ENCODE measurements at regions of chr21 and their contacts with region 1.

Region 1: GRCh38 chr21:32826329-32827167 is 55.0 kb upstream of the PAXBP1 start:
- DNase-seq: no peak
- ATAC-seq: peak; percentile 37 to 87 (median 83)
- H3K4me3 ChIP-seq: no peak overlapping the region
- H3K27ac ChIP-seq: no peak overlapping the region
- H3K4me1 ChIP-seq: no peaks in the 10 kb centered on the region
- H3K27me3 ChIP-seq: no peaks in the 10 kb centered on the region
- CTCF ChIP-seq: peak in 11 of 12 donors; percentile 4 to 59 (median 48)
- POLR2A ChIP-seq: no peak

Region 2: DNA sequence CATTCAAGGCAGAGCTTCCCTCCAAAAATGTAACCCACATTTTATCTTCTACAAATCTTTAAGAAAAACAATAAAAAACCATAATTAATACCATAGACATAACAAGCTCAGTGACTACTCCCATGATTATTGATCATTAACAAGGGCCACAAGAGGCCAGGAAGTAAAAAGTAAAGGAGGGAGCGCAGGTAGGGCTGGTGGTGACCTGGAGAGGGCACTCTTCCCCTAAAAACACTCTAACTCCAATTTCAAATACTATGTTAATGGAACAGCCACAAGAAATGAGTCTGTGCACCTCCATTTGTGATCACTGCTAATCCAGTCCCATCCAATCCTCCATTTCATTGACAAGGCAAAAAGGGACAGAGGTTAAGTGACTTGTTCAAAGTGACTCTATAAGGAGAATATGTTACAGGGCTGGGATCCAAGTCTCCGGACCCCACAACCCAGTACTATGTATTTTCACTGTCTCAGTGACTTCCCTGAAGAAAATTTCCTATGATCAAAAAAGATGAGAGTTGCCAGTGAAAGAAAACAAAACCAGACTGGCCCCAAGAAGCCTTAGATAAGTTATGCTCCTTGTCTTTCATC is 173.1 kb before region 1 on chr21:
- intact Hi-C with region 1: loop called in 7 of 10 experiments (anchors 2 to 10 kb)
- DNase-seq: no peak
- ATAC-seq: peak in 1 of 4 donors; percentile 36
- H3K4me3 ChIP-seq: no peak overlapping the region
- H3K27ac ChIP-seq: no peak overlapping the region
- H3K4me1 ChIP-seq: no peaks in the 10 kb centered on the region
- H3K27me3 ChIP-seq: no peaks in the 10 kb centered on the region
- CTCF ChIP-seq: peak; percentile 31 to 57 (median 50)
- POLR2A ChIP-seq: no peak

Region 3: GRCh38 chr21:32779983-32780382 is 46.6 kb before region 1 on chr21:
- intact Hi-C with region 1: loop called in 1 of 10 experiments (anchors 5 kb)
- DNase-seq: no peak
- ATAC-seq: no peak
- H3K4me3 ChIP-seq: no peak overlapping the region
- H3K27ac ChIP-seq: no peak overlapping the region
- H3K4me1 ChIP-seq: no peaks in the 10 kb centered on the region
- H3K27me3 ChIP-seq: no peaks in the 10 kb centered on the region
- CTCF ChIP-seq: no peak
- POLR2A ChIP-seq: no peak

Region 4: DNA sequence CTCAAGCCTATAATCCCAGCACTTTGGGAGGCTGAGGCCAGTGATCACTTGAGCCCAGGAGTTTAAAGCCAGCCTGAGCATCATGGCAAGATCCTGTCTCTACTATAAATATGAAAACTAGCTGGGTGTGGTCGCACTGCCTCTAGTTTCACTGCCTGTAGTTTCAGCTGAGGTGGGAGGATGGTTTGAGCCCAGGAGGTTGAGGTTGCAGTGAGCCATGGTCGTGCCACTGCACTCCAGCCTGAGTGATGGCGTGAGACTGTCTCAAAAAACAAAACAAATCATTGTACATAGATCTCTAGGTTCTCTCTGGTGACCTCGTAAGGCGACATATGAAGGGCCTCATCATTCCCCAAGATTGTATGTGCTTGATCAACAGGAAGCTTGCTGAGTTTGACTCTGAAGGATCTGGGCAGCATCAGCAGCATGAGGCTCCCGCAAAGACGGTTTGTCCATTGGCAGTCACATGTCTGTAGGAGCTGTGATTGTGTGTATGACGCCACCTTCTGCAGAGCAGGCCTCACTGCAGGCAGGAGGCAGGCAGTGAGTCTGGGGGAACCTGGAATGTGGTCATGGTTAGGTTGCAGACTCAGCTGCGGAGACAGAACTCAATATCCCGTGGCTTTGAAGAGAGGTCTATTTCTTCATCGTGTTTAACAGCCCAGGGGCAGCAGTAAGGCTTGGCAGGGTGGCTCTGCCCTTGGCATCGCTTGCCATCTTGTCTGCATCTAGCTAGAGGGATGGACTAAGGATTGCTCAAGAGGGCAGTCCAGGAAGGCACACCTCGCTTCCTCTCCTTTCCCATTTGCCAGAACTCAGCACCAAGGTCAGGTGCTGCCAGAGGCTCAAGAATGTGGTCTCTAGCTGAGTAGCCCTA is 1075.1 kb after region 1 on chr21:
- intact Hi-C with region 1: no loop called
- DNase-seq: peak in 2 of 5 donors; percentile 23 to 36
- ATAC-seq: peak; percentile 41 to 70 (median 68)
- H3K4me3 ChIP-seq: no peak overlapping the region
- H3K27ac ChIP-seq: peak overlapping the region in 1 of 12 donors; percentile 18
- H3K4me1 ChIP-seq: peaks cover 0 to 5% (median 0%) of the 10 kb centered on the region in 12 donors
- H3K27me3 ChIP-seq: no peaks in the 10 kb centered on the region
- CTCF ChIP-seq: peak in 10 of 12 donors; percentile 20 to 59 (median 39)
- POLR2A ChIP-seq: no peak